ENCODE measurements at regions of chr1 and their contacts with region 1.

Region 1: DNA sequence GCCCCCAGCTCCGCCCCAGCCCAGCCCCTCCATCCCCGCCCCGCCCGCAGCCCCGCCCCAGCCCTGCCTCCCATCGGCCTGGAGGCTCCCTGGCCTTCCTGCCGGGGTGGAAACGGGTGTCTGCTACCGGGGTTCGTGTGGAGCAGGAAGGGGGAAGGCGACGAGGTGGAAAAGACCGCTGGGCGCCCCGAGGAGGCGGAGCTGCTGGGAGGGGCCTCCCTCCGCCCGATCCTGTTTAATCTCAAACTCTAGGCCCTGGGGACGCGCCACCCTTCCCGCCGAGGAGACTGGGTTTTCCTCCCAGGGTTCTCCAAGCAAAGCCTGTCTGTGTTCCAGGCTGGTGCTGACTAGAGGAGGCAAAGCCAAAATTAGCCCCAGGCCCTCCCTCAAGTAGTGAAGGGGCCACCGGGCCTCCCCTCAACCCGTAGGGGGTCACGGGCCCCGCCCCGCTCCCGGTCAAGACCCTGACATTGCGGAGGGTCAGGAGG is 16.2 kb upstream of the TTLL10 start:
- DNase-seq: peak; percentile 71
- ATAC-seq: peak; percentile 80
- H3K4me3 Mint-ChIP-seq: peak overlapping the region; percentile 70
- H3K27ac Mint-ChIP-seq: peak overlapping the region; percentile 48
- H3K4me1 Mint-ChIP-seq: peaks cover 1% of the 10 kb centered on the region
- H3K27me3 Mint-ChIP-seq: no peaks in the 10 kb centered on the region

Region 2: DNA sequence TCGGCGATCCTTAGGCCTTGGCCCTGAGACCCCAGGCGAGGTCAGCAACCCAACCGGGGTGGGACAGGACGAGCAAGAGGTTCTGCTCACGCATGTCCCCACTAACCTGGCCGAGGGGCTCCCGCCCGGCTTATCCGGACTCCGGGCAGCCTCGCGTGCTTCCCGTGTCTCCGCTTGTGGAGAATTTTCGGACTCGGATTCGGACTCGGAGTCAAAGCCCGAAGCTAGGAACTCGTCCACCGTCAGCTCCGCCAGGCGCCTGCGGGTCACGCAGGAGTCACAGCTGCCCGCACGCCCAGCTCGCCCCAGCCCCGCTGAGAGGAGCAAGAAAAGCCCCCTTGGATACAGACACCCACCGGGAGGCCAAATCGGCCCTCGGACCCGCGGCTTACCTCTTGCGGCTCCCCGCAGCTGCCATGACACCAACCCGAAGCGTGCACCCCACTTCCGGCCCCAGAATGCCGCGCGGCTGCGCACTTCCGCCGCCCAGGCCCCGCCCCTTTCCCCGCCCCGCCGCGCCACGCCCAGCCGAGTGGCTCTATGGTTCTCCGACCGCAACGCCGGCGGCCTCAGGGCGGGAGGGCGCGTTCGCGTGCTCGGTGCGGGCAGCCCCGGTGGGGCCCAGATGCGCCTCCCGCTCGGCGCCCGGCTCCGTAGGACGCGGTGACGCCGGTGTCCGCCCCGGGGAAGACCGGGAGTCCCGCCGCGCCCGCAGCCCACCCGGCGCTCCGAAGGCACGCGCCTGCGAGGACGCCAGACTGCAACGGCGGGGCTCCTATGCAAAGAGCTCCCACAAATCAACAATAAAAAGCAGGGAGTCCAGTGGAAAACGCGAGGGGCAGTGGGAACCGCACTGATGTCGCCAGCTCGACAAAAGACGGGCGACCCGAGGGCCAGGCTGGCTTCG is 198.4 kb before region 1 on chr1 and contains the start of gene NOC2L:
- POLR2A ChIA-PET with region 1: no interaction called
- DNase-seq: peak; percentile 97
- ATAC-seq: peak; percentile 65
- H3K4me3 Mint-ChIP-seq: peak within 1 kb of the TSS; percentile 97
- H3K27ac Mint-ChIP-seq: peak within 1 kb of the TSS; percentile 85
- H3K4me1 Mint-ChIP-seq: peaks cover 14% of the 10 kb centered on the region
- H3K27me3 Mint-ChIP-seq: no peaks in the 10 kb centered on the region
- total RNA-seq, gene NOC2L: 63.0 to 63.4 TPM

Region 3: DNA sequence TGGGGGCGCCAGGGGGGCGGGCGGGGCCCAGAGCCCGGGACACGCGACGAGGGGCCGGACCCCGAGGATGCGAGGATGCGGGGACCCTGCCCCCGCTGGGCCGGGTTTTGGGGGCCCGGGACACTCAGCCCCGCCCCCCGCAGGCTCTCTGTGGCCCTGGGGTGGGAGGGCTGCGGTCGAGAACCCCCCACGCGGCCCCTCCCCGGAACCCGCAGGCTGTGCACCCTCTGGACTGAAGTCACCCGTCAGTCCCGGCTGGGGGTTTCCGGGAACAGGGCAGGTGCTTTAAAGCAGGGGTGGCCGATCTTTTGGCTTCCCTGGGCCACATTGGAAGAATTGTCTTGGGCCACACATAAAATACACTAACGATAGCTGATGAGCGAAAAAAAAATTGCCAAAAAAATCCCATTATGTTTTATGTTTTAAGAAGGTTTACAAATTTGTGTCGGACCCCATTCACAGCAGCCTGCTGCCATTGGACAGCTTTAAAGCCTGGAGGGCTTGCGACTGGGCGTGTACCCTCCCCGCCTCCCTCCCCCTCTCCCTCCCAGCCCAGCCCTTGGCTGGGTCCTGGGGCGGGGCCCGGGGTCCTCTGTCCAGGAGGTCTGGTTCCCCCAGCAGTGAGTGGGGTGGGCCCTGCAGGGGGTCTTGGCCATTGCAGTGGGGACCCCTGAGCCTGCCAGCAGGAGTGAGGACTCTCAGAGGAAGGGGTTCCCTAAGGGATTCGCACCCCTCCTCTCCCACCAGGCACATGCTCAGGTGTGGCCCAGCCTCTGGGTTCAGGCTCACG is 20.0 kb before region 1 on chr1:
- POLR2A ChIA-PET with region 1: interaction called, 11 read pairs
- DNase-seq: peak; percentile 82
- ATAC-seq: peak; percentile 73
- H3K4me3 Mint-ChIP-seq: peak overlapping the region; percentile 79
- H3K27ac Mint-ChIP-seq: peak overlapping the region; percentile 94
- H3K4me1 Mint-ChIP-seq: peaks cover 13% of the 10 kb centered on the region
- H3K27me3 Mint-ChIP-seq: peaks cover 4% of the 10 kb centered on the region

Region 4: GRCh38 chr1:1173793-1174415 is 16.4 kb after region 1 on chr1 and contains the start of gene TTLL10:
- POLR2A ChIA-PET with region 1: interaction called, 12 read pairs
- DNase-seq: peak; percentile 73
- ATAC-seq: peak; percentile 77
- H3K4me3 Mint-ChIP-seq: peak within 1 kb of the TSS; percentile 28
- H3K27ac Mint-ChIP-seq: peak within 1 kb of the TSS; percentile 61
- H3K4me1 Mint-ChIP-seq: peaks cover 9% of the 10 kb centered on the region
- H3K27me3 Mint-ChIP-seq: peaks cover 25% of the 10 kb centered on the region
- total RNA-seq, gene TTLL10: not detected

Measured in activated naive CD8-positive, alpha-beta T cell treated with anti-CD3 and anti-CD28 coated beads, Interleukin-2, amount 10 ng/mL, durations not matched to agents 7 days and 5 days (primary cell).